BJ (cell line): ENCODE measurements at regions of chr10 and their contacts with region 1.

Region 1: GRCh38 chr10:102476466-102477141 is 25.3 kb upstream of the C10orf95 start:
- DNase-seq: no peak
- H3K4me3 ChIP-seq: no peak overlapping the region
- H3K27me3 ChIP-seq: no peaks in the 10 kb centered on the region
- CTCF ChIP-seq: no peak

Region 2: DNA sequence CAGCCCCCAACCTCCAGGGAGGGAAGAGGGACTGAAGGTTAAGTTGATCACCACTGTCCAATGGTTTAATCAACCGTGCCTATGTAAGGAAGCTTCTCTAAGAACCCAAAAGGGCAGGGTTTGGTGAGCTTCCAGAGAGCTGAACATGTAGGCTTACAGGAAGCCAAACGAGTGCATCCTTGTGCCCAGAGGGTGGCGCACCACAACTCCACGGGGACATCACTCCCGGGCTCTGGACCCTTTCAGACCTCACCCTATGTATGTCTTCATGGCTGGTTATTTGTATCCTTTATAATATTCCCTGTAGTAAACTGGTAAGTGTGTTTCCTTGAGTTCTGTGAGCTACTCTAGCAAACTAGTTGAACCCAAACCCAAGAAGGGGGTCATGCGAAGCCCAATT is 92.6 kb before region 1 on chr10:
- CTCF ChIA-PET with region 1: interaction called, 17 read pairs
- POLR2A ChIA-PET with region 1: no interaction called
- DNase-seq: no peak
- H3K4me3 ChIP-seq: no peak overlapping the region
- H3K27me3 ChIP-seq: no peaks in the 10 kb centered on the region
- CTCF ChIP-seq: peak; percentile 30; the same call in 1 of the 2 replicates

Region 3: GRCh38 chr10:102399217-102400089 is 77.2 kb before region 1 on chr10:
- CTCF ChIA-PET with region 1: interaction called, 32 read pairs
- POLR2A ChIA-PET with region 1: no interaction called
- DNase-seq: no peak
- H3K4me3 ChIP-seq: peak overlapping the region; percentile 48
- H3K27me3 ChIP-seq: no peaks in the 10 kb centered on the region
- CTCF ChIP-seq: peak; percentile 86

Region 4: GRCh38 chr10:102420810-102421644 is 55.6 kb before region 1 on chr10 and contains the start of gene FBXL15:
- CTCF ChIA-PET with region 1: interaction called, 37 read pairs
- POLR2A ChIA-PET with region 1: no interaction called
- DNase-seq: peak; percentile 68
- H3K4me3 ChIP-seq: peak within 1 kb of the TSS; percentile 82
- H3K27me3 ChIP-seq: peaks cover 4% of the 10 kb centered on the region
- CTCF ChIP-seq: no peak
- polyA plus RNA-seq, gene FBXL15: 3.5 and 7.5 TPM in 2 replicates

Region 5: DNA sequence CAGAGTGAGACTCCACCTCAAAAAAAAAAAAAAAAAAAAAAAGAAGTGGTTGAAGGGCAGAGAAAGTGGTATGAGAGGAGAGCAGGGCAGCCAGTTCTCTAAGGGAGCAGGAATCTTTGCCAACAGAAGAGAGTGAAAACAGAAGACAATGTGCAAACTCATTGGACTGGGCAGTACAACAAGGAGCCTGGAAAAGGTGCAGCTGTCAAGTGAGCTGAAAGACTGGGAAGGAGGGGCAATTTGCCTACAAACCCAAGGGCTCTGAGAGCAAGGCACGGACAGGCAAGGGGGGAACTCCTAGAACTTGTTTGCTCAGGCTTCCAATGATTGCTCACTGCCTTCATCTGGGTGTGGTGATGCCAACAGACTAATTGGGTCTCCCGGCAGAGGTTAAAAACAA is 16.4 kb after region 1 on chr10:
- CTCF ChIA-PET with region 1: interaction called, 13 read pairs
- POLR2A ChIA-PET with region 1: no interaction called
- DNase-seq: no peak
- H3K4me3 ChIP-seq: no peak overlapping the region
- H3K27me3 ChIP-seq: no peaks in the 10 kb centered on the region
- CTCF ChIP-seq: no peak

Region 6: GRCh38 chr10:102660888-102661657 is 184.5 kb after region 1 on chr10:
- CTCF ChIA-PET with region 1: no interaction called
- POLR2A ChIA-PET with region 1: no interaction called
- DNase-seq: peak; percentile 24
- H3K4me3 ChIP-seq: no peak overlapping the region
- H3K27me3 ChIP-seq: no peaks in the 10 kb centered on the region
- CTCF ChIP-seq: no peak

Region 7: GRCh38 chr10:102691285-102692066 is 214.9 kb after region 1 on chr10:
- CTCF ChIA-PET with region 1: no interaction called
- POLR2A ChIA-PET with region 1: no interaction called
- DNase-seq: no peak
- H3K4me3 ChIP-seq: no peak overlapping the region
- H3K27me3 ChIP-seq: no peaks in the 10 kb centered on the region
- CTCF ChIP-seq: no peak

Region 8: DNA sequence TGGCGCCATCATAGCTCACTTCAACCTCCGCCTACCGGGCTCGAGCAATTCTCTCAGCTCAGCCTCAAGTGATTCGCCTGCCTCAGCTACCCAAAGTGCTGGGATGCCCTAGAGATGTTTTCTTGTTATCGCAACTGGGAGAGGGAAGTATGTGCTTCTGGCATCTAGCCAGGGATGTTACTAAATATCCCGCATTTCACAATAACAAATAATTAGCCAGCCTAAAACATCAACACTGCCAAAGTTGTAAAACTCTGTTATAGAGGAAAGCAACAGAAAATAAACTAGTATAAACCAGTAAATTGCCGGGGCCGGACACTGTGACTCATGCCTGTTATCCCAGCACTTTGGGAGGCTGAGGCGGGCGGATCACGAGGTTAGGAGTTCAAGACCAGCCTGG is 807.6 kb after region 1 on chr10:
- CTCF ChIA-PET with region 1: no interaction called
- POLR2A ChIA-PET with region 1: no interaction called
- DNase-seq: peak; percentile 13
- H3K4me3 ChIP-seq: no peak overlapping the region
- H3K27me3 ChIP-seq: no peaks in the 10 kb centered on the region; the same call in 1 of the 2 replicates
- CTCF ChIP-seq: no peak